ENCODE measurements at regions of chr18 and their contacts with region 1.

Region 1: DNA sequence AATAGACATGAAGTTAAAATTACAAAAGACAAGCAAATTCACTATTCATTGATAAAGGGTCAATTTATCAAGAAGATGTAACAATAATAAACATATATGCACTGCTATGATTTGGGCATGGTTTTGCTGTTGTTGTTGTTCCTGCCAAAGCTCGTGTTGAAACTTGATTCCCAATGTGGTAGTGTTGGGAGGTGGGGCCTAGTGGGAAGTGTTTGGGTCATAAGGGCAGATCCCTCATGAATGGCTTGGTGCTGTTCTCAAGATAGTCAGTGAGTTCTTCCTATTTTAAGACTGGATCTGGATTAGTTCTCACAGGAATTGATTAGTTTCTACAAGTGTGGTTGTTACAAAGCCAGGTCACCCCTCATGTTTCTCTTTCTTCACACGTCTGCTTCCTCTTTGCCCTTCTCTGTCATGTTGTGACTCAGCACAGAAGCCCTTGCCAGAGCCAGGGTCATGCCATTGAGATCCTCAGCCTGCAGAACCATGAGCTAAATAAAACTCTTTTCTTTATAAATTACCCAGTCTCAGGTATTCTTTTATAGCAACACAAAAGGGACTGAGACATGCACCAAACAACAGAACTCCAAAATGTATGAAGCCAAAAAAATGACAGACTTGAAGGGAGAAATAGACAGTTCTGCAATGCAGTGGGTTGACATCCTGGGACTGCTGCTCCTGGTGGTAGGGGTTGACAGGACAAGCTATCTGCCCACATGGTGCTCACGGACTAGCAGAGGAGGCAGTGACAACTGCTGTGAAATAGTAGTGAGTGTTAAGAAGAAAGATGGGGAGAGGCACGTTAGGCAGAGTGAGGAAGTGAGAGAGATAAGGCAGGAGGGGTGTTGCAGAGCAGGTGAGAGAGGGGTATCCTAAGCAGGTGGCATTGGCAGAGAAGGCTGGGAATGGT is 18.6 kb upstream of the SKA1 start:
- DNase-seq: peak; percentile 63
- H3K4me3 Mint-ChIP-seq: no peak overlapping the region
- H3K27ac Mint-ChIP-seq: peak overlapping the region; percentile 15
- H3K4me1 Mint-ChIP-seq: peaks cover 8% of the 10 kb centered on the region
- H3K27me3 Mint-ChIP-seq: peaks cover 29% of the 10 kb centered on the region

Region 2: DNA sequence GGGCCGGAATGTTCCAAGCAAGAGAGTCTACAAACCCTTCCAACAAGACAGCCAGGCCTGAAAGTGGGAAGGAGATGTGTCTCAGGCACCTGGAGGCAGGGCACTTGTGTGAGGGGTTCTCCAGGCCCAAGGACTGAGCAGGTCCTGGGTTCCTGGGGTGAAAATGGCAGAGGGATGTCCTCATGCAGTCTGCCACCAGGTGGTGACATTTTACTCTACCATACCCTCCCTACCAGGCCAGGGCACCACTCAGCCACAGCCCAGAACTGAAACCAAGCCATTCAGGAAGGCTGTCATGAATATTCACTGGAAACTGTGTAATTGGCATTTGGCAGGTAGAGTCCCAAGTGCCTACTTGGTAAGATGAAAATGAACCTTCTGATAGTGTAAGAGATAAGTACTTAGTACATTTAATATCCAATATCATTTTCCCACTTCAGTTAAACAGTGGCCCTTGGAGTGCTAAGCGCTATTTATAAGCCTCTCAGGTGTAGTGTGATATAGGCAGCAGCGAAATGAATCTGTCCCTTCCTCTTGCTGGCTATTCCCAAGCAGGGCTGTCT is 346.4 kb before region 1 on chr18:
- intact Hi-C with region 1: loop called (anchors 5 kb)
- DNase-seq: peak; percentile 83
- H3K4me3 Mint-ChIP-seq: no peak overlapping the region
- H3K27ac Mint-ChIP-seq: no peak overlapping the region
- H3K4me1 Mint-ChIP-seq: peaks cover 1% of the 10 kb centered on the region
- H3K27me3 Mint-ChIP-seq: peaks cover 6% of the 10 kb centered on the region

Region 3: GRCh38 chr18:50218432-50219197 is 137.7 kb before region 1 on chr18:
- intact Hi-C with region 1: loop called (anchors 1 kb)
- DNase-seq: peak; percentile 82
- H3K4me3 Mint-ChIP-seq: no peak overlapping the region
- H3K27ac Mint-ChIP-seq: no peak overlapping the region
- H3K4me1 Mint-ChIP-seq: no peaks in the 10 kb centered on the region
- H3K27me3 Mint-ChIP-seq: peaks cover 31% of the 10 kb centered on the region

Region 4: GRCh38 chr18:50266248-50266704 is 90.0 kb before region 1 on chr18 and contains the start of gene CFAP53:
- intact Hi-C with region 1: loop called (anchors 5 kb)
- DNase-seq: peak; percentile 95
- H3K4me3 Mint-ChIP-seq: peak within 1 kb of the TSS; percentile 83
- H3K27ac Mint-ChIP-seq: peak within 1 kb of the TSS; percentile 78
- H3K4me1 Mint-ChIP-seq: peaks cover 20% of the 10 kb centered on the region
- H3K27me3 Mint-ChIP-seq: peaks cover 6% of the 10 kb centered on the region
- total RNA-seq, gene CFAP53: 0.38 and 0.63 TPM in 2 replicates

Region 5: GRCh38 chr18:50320719-50321118 is 35.6 kb before region 1 on chr18:
- intact Hi-C with region 1: loop called (anchors 5 kb)
- DNase-seq: no peak
- H3K4me3 Mint-ChIP-seq: peak overlapping the region; percentile 71
- H3K27ac Mint-ChIP-seq: peak overlapping the region; percentile 65
- H3K4me1 Mint-ChIP-seq: peaks cover 16% of the 10 kb centered on the region
- H3K27me3 Mint-ChIP-seq: peaks cover 2% of the 10 kb centered on the region

Measured in activated CD4-positive, alpha-beta T cell treated with anti-CD3 and anti-CD28 coated beads, Interleukin-2, amount 10 ng/mL, durations not matched to agents 24 days and 14 days (primary cell).